Heart left ventricle (tissue), 16 donors: ENCODE measurements at regions of chr1 and their contacts with region 1.

Region 1: GRCh38 chr1:216310776-216311175 is 112.5 kb downstream of the USH2A start:
- DNase-seq: no peak
- ATAC-seq: peak in 3 of 4 donors; percentile 33 to 54 (median 44)
- H3K4me3 ChIP-seq: no peak overlapping the region
- H3K27ac ChIP-seq: no peak overlapping the region
- H3K4me1 ChIP-seq: no peaks in the 10 kb centered on the region
- H3K27me3 ChIP-seq: no peaks in the 10 kb centered on the region
- CTCF ChIP-seq: peak in 11 of 12 donors; percentile 12 to 56 (median 40)
- POLR2A ChIP-seq: no peak

Region 2: DNA sequence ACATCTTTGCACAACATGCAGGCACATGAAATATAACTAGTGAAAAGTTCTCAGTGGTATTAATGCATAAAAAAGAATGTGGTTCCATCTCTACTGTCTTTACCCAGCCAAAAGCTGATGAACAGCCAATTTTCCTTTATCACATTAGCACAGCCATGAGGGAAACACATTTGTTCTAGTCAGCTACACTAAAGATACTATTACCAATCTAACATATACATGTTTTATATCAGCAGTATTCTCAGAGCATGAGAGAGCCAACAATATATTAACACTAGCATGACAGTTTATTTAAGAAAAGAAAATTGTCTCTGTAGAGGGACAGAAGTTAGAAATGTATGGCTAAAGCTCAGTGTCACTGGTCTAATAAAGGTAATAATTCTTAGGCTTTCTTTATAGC is 56.2 kb after region 1 on chr1:
- intact Hi-C with region 1: no loop called
- DNase-seq: no peak
- ATAC-seq: no peak
- H3K4me3 ChIP-seq: no peak overlapping the region
- H3K27ac ChIP-seq: no peak overlapping the region
- H3K4me1 ChIP-seq: no peaks in the 10 kb centered on the region
- H3K27me3 ChIP-seq: no peaks in the 10 kb centered on the region
- CTCF ChIP-seq: no peak
- POLR2A ChIP-seq: no peak

Region 3: GRCh38 chr1:216390956-216391355 is 80.2 kb after region 1 on chr1:
- intact Hi-C with region 1: no loop called
- DNase-seq: no peak
- ATAC-seq: no peak
- H3K4me3 ChIP-seq: no peak overlapping the region
- H3K27ac ChIP-seq: no peak overlapping the region
- H3K4me1 ChIP-seq: no peaks in the 10 kb centered on the region
- H3K27me3 ChIP-seq: no peaks in the 10 kb centered on the region
- CTCF ChIP-seq: no peak
- POLR2A ChIP-seq: no peak

Region 4: DNA sequence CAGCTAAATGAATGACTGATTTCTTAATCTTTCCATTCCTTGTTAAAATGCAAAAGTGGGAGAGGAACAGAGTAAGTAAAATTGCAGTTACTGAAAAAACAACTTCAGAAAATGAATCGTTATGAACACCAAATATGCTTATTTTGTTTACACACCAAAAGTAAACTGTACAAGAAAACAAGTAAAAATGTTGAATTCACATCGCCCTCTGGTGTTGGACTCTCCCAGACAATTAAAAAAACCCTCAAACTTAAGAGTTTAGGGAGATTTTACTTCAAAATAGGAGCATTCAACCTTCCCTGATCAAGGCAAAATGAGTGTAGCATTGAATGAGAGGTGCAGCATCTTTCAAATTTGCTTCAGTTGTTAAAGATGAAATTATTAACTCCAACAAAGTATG is 431.8 kb after region 1 on chr1:
- intact Hi-C with region 1: loop called in 4 of 10 experiments (anchors 5 to 10 kb)
- DNase-seq: no peak
- ATAC-seq: no peak
- H3K4me3 ChIP-seq: no peak overlapping the region
- H3K27ac ChIP-seq: no peak overlapping the region
- H3K4me1 ChIP-seq: peaks cover 0 to 11% (median 0%) of the 10 kb centered on the region in 12 donors
- H3K27me3 ChIP-seq: no peaks in the 10 kb centered on the region
- CTCF ChIP-seq: peak in 7 of 12 donors; percentile 16 to 33 (median 24)
- POLR2A ChIP-seq: no peak